ENCODE measurements at regions of chr2 and their contacts with region 1.

Region 1: DNA sequence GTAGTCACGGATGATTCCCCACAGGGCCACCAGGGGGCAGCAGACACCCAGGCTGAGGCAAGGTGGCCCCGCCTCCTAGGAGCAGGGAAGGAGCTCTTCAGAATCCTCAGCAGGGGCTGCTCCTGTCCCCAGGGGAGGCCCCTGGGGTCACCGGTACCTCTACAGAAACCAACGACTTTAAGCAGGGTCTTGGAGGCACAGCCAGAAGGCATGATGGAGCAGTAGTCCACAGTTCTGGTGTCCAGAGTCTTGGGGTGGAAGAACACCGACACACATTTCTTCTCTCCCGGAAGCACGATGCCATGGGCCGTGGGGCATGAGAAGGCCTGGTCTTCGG is 11.5 kb downstream of the CFAP65 start:
- DNase-seq: peak; percentile 50
- ATAC-seq: peak; percentile 95
- H3K4me3 ChIP-seq: no peak overlapping the region
- H3K27ac ChIP-seq: no peak overlapping the region
- H3K4me1 ChIP-seq: no peaks in the 10 kb centered on the region
- H3K27me3 ChIP-seq: 0 out of 2 replicates have a peak, but pooled peaks cover 2% of the 10 kb centered on the region
- CTCF ChIP-seq: peak; percentile 98

Region 2: GRCh38 chr2:219002395-219003266 is 27.2 kb before region 1 on chr2:
- CTCF ChIA-PET with region 1: interaction called, 6 read pairs
- POLR2A ChIA-PET with region 1: no interaction called
- in situ Hi-C with region 1: no loop called
- intact Hi-C with region 1: loop called (anchors 2 kb)
- DNase-seq: no peak
- ATAC-seq: peak; percentile 72
- H3K4me3 ChIP-seq: peak overlapping the region; percentile 33 to 49
- H3K27ac ChIP-seq: no peak overlapping the region
- H3K4me1 ChIP-seq: no peaks in the 10 kb centered on the region; the same call in 1 of the 2 replicates
- H3K27me3 ChIP-seq: peaks cover 4% of the 10 kb centered on the region; the same call in 1 of the 2 replicates
- CTCF ChIP-seq: peak; percentile 83

Region 3: GRCh38 chr2:219041252-219041651 is 11.5 kb after region 1 on chr2 and contains the start of gene CFAP65:
- CTCF ChIA-PET with region 1: interaction called, 21 read pairs
- POLR2A ChIA-PET with region 1: no interaction called
- in situ Hi-C with region 1: no loop called
- intact Hi-C with region 1: no loop called
- DNase-seq: peak; percentile 10
- ATAC-seq: peak; percentile 88
- H3K4me3 ChIP-seq: peak within 1 kb of the TSS; percentile 69 to 78
- H3K27ac ChIP-seq: no peak within 1 kb of the TSS
- H3K4me1 ChIP-seq: no peaks in the 10 kb centered on the region
- H3K27me3 ChIP-seq: peaks cover 19% of the 10 kb centered on the region
- CTCF ChIP-seq: no peak
- total RNA-seq, gene CFAP65: 0.33 TPM

Region 4: GRCh38 chr2:219155054-219155644 is 125.4 kb after region 1 on chr2:
- CTCF ChIA-PET with region 1: interaction called, 13 read pairs
- POLR2A ChIA-PET with region 1: no interaction called
- in situ Hi-C with region 1: no loop called
- intact Hi-C with region 1: loop called (anchors 10 kb)
- DNase-seq: peak; percentile 39
- ATAC-seq: peak; percentile 72
- H3K4me3 ChIP-seq: no peak overlapping the region
- H3K27ac ChIP-seq: no peak overlapping the region
- H3K4me1 ChIP-seq: peaks cover 5% of the 10 kb centered on the region
- H3K27me3 ChIP-seq: no peaks in the 10 kb centered on the region
- CTCF ChIP-seq: peak; percentile 59

Region 5: GRCh38 chr2:219229305-219230058 is 199.7 kb after region 1 on chr2 and contains the starts of genes ANKZF1 and ATG9A:
- CTCF ChIA-PET with region 1: no interaction called
- POLR2A ChIA-PET with region 1: no interaction called
- in situ Hi-C with region 1: no loop called
- intact Hi-C with region 1: no loop called
- DNase-seq: peak; percentile 90
- ATAC-seq: peak; percentile 99
- H3K4me3 ChIP-seq: peak within 1 kb of the TSS; percentile 98 to 99
- H3K27ac ChIP-seq: peak within 1 kb of the TSS; percentile 91
- H3K4me1 ChIP-seq: peaks cover 8% of the 10 kb centered on the region
- H3K27me3 ChIP-seq: no peaks in the 10 kb centered on the region
- CTCF ChIP-seq: no peak
- total RNA-seq, gene ANKZF1: 36.2 TPM
- total RNA-seq, gene ATG9A: 75.1 TPM